CD4-positive, alpha-beta T cell (primary cell): ENCODE measurements at regions of chr2 and their contacts with region 1.

Region 1: GRCh38 chr2:230798769-230799399 is 65.9 kb upstream of the ITM2C start:
- DNase-seq: peak in 11 of 14 experiments; percentile 15 to 79 (median 40)
- ATAC-seq: peak; percentile 39
- H3K4me3 ChIP-seq: no peak overlapping the region
- H3K4me3 Mint-ChIP-seq: no peak overlapping the region
- H3K27ac ChIP-seq: no peak overlapping the region
- H3K27ac Mint-ChIP-seq: peak overlapping the region; percentile 82
- H3K4me1 ChIP-seq: peaks cover 35% of the 10 kb centered on the region
- H3K4me1 Mint-ChIP-seq: peaks cover 16% of the 10 kb centered on the region
- H3K27me3 ChIP-seq: no peaks in the 10 kb centered on the region
- H3K27me3 Mint-ChIP-seq: no peaks in the 10 kb centered on the region
- CTCF ChIP-seq: peak; percentile 82

Region 2: GRCh38 chr2:230225486-230225885 is 573.4 kb before region 1 on chr2 and contains the start of gene SP140:
- CTCF ChIA-PET with region 1: no interaction called
- POLR2A ChIA-PET with region 1: interaction called, 4 read pairs
- intact Hi-C with region 1: loop called in 1 of 2 experiments (anchors 5 kb)
- DNase-seq: peak; percentile 50 to 97 (median 70)
- ATAC-seq: peak; percentile 89
- H3K4me3 ChIP-seq: peak within 1 kb of the TSS; percentile 75
- H3K4me3 Mint-ChIP-seq: peak within 1 kb of the TSS; percentile 90
- H3K27ac ChIP-seq: peak within 1 kb of the TSS; percentile 64 to 89
- H3K27ac Mint-ChIP-seq: peak within 1 kb of the TSS; percentile 93
- H3K4me1 ChIP-seq: peaks cover 29% of the 10 kb centered on the region
- H3K4me1 Mint-ChIP-seq: peaks cover 64% of the 10 kb centered on the region
- H3K27me3 ChIP-seq: no peaks in the 10 kb centered on the region
- H3K27me3 Mint-ChIP-seq: no peaks in the 10 kb centered on the region
- CTCF ChIP-seq: no peak
- total RNA-seq, gene SP140: 51.2 to 55.1 TPM

Region 3: DNA sequence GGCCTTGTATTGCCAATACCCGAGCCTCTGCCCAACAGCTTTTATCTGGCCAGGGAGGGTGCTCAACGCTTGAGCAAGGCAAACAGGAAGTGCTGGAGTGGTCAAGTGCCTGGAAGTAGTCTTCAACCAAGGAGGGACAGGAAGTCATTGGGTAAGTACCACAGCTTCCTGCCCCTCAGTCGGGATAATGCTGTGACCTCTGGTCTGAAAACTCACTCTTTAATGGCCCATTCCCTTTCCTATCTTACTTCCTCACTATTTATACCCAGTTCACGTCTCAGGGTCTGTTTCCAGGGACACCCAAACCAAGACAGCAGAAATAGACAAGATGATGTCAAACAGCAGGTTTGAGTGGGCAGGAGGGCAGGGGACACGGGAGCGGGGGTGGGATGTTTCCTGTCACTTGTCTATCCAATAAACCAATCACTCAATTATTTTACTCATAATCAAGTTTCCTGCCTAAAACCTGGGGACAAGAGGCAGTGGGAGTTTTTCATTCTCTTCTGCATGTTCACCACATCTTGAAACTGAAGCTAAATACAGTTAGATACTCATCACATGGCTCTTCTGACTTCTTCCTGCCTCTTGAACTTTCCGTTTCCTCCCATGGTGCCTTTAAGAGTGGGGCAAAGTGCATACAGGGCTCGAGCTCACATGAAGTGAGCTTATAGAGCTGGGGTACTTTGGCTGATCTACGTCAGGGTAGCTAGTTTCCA is 155.2 kb before region 1 on chr2:
- CTCF ChIA-PET with region 1: interaction called, 3 read pairs
- POLR2A ChIA-PET with region 1: no interaction called
- intact Hi-C with region 1: loop called in 1 of 2 experiments (anchors 1 kb)
- DNase-seq: peak in 5 of 14 experiments; percentile 41 to 78 (median 70)
- ATAC-seq: peak; percentile 97
- H3K4me3 ChIP-seq: peak overlapping the region; percentile 4
- H3K4me3 Mint-ChIP-seq: peak overlapping the region; percentile 52
- H3K27ac ChIP-seq: peak overlapping the region; percentile 73 to 85
- H3K27ac Mint-ChIP-seq: peak overlapping the region; percentile 91
- H3K4me1 ChIP-seq: peaks cover 31% of the 10 kb centered on the region
- H3K4me1 Mint-ChIP-seq: peaks cover 28% of the 10 kb centered on the region
- H3K27me3 ChIP-seq: no peaks in the 10 kb centered on the region
- H3K27me3 Mint-ChIP-seq: no peaks in the 10 kb centered on the region
- CTCF ChIP-seq: no peak

Region 4: GRCh38 chr2:230762317-230762896 is 36.5 kb before region 1 on chr2:
- CTCF ChIA-PET with region 1: interaction called, 8 read pairs
- POLR2A ChIA-PET with region 1: interaction called, 4 read pairs
- intact Hi-C with region 1: loop called (anchors 5 kb)
- DNase-seq: peak in 10 of 14 experiments; percentile 7 to 61 (median 34)
- ATAC-seq: peak; percentile 92
- H3K4me3 ChIP-seq: no peak overlapping the region
- H3K4me3 Mint-ChIP-seq: no peak overlapping the region
- H3K27ac ChIP-seq: no peak overlapping the region
- H3K27ac Mint-ChIP-seq: peak overlapping the region; percentile 30
- H3K4me1 ChIP-seq: peaks cover 25% of the 10 kb centered on the region
- H3K4me1 Mint-ChIP-seq: peaks cover 77% of the 10 kb centered on the region
- H3K27me3 ChIP-seq: no peaks in the 10 kb centered on the region
- H3K27me3 Mint-ChIP-seq: no peaks in the 10 kb centered on the region
- CTCF ChIP-seq: peak; percentile 56